Caco-2 (cell line): ENCODE measurements at regions of chr3 and their contacts with region 1.

Region 1: GRCh38 chr3:40452876-40453730 is 4.0 kb upstream of the RPL14 start:
- DNase-seq: peak; percentile 96 to 98
- H3K4me3 ChIP-seq: peak overlapping the region; percentile 58
- H3K4me3 Mint-ChIP-seq: peak overlapping the region; percentile 82
- H3K27ac Mint-ChIP-seq: peak overlapping the region; percentile 86
- H3K4me1 ChIP-seq: no peaks in the 10 kb centered on the region
- H3K4me1 Mint-ChIP-seq: peaks cover 13% of the 10 kb centered on the region
- H3K27me3 ChIP-seq: no peaks in the 10 kb centered on the region
- H3K27me3 Mint-ChIP-seq: no peaks in the 10 kb centered on the region
- CTCF ChIP-seq: no peak

Region 2: DNA sequence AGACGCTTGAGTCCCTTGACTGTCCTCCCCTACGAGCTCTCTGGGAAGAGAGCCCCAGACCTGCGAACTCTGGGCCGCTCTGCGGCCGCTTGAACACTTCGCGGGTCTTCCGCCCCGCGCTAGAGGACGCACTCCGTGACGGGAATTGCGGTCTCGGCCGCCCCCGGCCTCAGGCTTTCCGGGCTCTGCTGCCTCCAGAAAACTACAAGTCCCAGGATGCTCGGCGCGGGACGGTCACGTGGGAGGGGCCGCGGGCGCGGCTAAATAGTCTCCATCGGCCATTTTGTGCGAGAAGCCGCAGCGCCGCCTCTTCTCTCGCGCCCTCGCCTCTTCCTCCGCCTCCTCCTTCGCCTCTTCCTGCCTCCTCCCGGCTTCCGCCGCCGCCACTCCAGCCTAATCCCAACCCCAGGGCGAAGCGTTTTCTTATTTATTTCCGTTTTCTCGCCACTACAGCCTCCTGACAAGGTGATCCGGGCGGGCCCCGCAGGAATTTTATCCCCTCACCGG is 143.6 kb before region 1 on chr3 and contains the start of gene EIF1B:
- CTCF ChIA-PET with region 1: interaction called, 4 read pairs
- POLR2A ChIA-PET with region 1: no interaction called
- intact Hi-C with region 1: loop called (anchors 1 kb)
- DNase-seq: peak; percentile 96 to 98
- H3K4me3 ChIP-seq: peak within 1 kb of the TSS; percentile 80
- H3K4me3 Mint-ChIP-seq: peak within 1 kb of the TSS; percentile 98
- H3K27ac Mint-ChIP-seq: peak within 1 kb of the TSS; percentile 93
- H3K4me1 ChIP-seq: peaks cover 11% of the 10 kb centered on the region
- H3K4me1 Mint-ChIP-seq: peaks cover 9% of the 10 kb centered on the region
- H3K27me3 ChIP-seq: no peaks in the 10 kb centered on the region
- H3K27me3 Mint-ChIP-seq: no peaks in the 10 kb centered on the region
- CTCF ChIP-seq: peak; percentile 85 to 93
- total RNA-seq, gene EIF1B: 45.8 and 47.3 TPM in 2 replicates